Mammary epithelial cell (primary cell): ENCODE measurements at regions of chr15 and their contacts with region 1.

Region 1: DNA sequence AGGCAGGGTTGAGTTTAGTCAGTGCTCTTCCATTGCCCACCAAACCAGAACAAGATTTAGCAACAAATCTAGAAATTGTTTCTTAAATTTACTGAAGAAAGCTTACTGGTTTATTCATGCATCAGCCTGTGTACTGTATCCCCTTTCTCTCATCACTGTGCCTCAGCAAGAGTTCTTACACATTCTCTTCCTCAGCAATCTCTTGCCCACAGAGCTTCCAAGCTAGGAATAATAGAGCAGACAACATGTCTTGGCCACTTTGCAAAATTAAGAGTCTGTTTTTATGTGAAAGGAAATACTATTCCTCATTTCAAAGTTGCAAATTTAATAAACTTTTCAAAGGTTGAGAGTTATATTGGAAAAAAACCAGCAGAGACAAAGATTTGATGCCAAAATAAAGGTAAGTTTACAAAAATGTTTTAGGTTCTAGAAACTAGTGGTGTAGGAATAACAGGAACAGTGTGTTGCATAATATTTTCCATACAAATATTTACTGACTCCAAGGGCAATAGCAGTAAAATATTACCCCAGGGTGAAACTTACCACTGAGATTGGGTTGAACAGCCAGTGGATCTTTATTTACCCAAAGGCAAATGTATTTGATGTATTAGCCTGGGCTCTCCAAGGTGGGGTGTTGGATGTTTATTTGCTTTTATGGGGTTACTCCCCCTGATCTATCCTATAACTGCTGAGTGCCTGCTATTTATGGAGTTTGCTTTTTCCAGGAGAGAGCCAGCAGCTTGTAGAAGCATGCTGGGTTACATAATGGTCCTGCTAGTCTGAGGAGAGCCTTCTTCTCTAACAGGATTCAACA is 276.7 kb downstream of the ADAMTSL3 start:
- DNase-seq: peak; percentile 20
- H3K4me3 ChIP-seq: no peak overlapping the region
- H3K27ac ChIP-seq: no peak overlapping the region
- H3K4me1 ChIP-seq: peaks cover 4% of the 10 kb centered on the region
- H3K27me3 ChIP-seq: no peaks in the 10 kb centered on the region
- CTCF ChIP-seq: no peak

Region 2: GRCh38 chr15:83769416-83770004 is 161.1 kb before region 1 on chr15:
- CTCF ChIA-PET with region 1: interaction called, 18 read pairs
- dilution Hi-C with region 1: no loop called
- in situ Hi-C with region 1: no loop called
- intact Hi-C with region 1: no loop called
- DNase-seq: peak; percentile 66
- H3K4me3 ChIP-seq: no peak overlapping the region
- H3K27ac ChIP-seq: no peak overlapping the region
- H3K4me1 ChIP-seq: no peaks in the 10 kb centered on the region
- H3K27me3 ChIP-seq: no peaks in the 10 kb centered on the region
- CTCF ChIP-seq: no peak

Region 3: GRCh38 chr15:83992324-83993031 is 61.9 kb after region 1 on chr15:
- CTCF ChIA-PET with region 1: no interaction called
- dilution Hi-C with region 1: loop called (anchors 5 kb)
- in situ Hi-C with region 1: no loop called
- intact Hi-C with region 1: no loop called
- DNase-seq: no peak
- H3K4me3 ChIP-seq: no peak overlapping the region
- H3K27ac ChIP-seq: no peak overlapping the region
- H3K4me1 ChIP-seq: no peaks in the 10 kb centered on the region
- H3K27me3 ChIP-seq: no peaks in the 10 kb centered on the region
- CTCF ChIP-seq: no peak